MCF 10A (cell line): ENCODE measurements at regions of chr6 and their contacts with region 1.

Region 1: DNA sequence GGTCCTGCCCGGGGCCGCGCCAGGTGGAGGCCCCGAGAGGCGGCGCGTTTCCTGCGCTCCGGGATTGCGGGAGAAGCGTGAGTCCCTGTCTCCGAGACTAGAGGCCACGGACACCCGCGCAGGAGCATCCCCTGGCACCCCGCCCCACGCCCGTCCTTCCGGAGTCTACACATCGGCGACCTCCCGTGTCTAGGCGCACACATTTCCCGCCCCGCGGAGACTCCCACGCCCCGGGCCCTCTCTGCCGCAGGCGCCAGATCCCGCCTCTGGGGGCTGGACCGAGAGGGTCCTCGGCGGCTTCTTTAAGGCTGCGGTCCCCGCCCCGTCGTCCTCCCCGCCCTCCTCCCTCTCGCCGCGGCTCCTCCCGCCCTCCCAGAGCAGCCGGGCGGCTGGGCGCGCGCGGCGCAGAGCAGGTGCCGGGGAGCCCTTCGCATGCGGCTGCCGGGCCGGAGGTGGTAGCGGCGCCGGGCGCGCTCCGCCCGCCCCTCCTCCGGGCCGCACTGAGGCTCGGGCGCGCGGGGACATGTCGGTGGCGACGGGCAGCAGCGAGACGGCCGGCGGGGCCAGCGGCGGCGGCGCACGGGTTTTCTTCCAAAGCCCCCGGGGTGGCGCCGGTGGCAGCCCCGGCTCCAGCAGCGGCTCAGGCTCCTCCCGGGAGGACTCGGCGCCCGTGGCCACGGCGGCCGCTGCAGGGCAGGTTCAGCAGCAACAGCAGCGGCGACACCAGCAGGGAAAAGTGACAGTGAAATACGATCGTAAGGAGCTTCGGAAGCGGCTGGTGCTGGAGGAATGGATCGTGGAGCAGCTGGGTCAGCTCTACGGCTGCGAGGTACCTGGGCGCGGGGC is at the start of gene PPP1R14C:
- DNase-seq: peak; percentile 65
- H3K4me3 Mint-ChIP-seq: peak within 1 kb of the TSS; percentile 83
- H3K27ac Mint-ChIP-seq: peak within 1 kb of the TSS; percentile 96
- H3K4me1 Mint-ChIP-seq: peaks cover 35% of the 10 kb centered on the region
- H3K27me3 Mint-ChIP-seq: no peaks in the 10 kb centered on the region
- CTCF ChIP-seq: no peak
- total RNA-seq, gene PPP1R14C: 32.0 and 38.7 TPM in 2 replicates

Region 2: DNA sequence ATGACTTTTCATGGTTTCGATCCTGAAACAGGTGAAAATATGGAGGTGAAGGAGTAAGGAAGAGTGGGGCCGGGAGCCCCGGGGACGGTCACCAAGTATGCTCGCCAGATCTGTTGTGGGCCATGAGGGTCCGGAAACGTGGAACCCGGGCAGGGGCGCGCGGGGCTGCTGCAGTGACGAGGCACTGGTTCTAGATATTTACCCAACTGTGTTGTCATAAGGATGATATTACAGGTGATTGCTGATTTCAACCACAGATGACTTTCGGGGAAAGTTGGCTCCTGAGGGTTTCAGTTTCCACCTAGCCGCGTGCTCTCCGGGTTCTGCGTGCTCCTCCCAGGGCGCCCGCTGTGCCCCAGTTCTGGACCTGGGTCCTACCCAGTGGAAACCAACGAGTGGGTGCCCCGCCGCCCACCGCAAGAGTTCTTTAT is 232.2 kb before region 1 on chr6:
- CTCF ChIA-PET with region 1: no interaction called
- POLR2A ChIA-PET with region 1: no interaction called
- intact Hi-C with region 1: no loop called
- DNase-seq: no peak
- H3K4me3 Mint-ChIP-seq: no peak overlapping the region
- H3K27ac Mint-ChIP-seq: no peak overlapping the region
- H3K4me1 Mint-ChIP-seq: peaks cover 5% of the 10 kb centered on the region
- H3K27me3 Mint-ChIP-seq: no peaks in the 10 kb centered on the region
- CTCF ChIP-seq: no peak

Region 3: GRCh38 chr6:150063640-150064039 is 79.3 kb before region 1 on chr6:
- CTCF ChIA-PET with region 1: no interaction called
- POLR2A ChIA-PET with region 1: no interaction called
- intact Hi-C with region 1: no loop called
- DNase-seq: no peak
- H3K4me3 Mint-ChIP-seq: no peak overlapping the region
- H3K27ac Mint-ChIP-seq: no peak overlapping the region
- H3K4me1 Mint-ChIP-seq: no peaks in the 10 kb centered on the region
- H3K27me3 Mint-ChIP-seq: peaks cover 4% of the 10 kb centered on the region
- CTCF ChIP-seq: no peak

Region 4: DNA sequence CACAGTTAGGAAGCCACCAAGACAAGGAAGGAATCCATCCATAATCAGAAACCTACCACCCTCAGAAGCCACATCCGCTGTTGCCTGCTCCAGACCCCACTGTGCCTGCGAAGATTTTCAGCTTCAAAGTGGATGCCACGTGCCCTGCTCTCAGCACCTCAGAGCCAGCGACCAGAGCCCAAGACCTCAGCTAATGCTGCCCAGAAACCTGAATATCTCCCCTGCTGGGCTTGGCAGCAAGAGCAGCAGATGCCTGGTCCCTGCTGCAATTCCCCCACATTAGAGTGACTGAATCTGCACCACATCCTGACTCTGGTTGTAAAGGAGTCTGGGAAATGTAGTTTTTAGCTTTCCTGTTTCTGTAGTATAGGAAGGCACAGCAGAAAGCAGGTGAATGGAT is 63.3 kb before region 1 on chr6:
- CTCF ChIA-PET with region 1: interaction called, 7 read pairs
- POLR2A ChIA-PET with region 1: interaction called, 17 read pairs
- intact Hi-C with region 1: loop called (anchors 2 kb)
- DNase-seq: no peak
- H3K4me3 Mint-ChIP-seq: no peak overlapping the region
- H3K27ac Mint-ChIP-seq: no peak overlapping the region
- H3K4me1 Mint-ChIP-seq: peaks cover 6% of the 10 kb centered on the region
- H3K27me3 Mint-ChIP-seq: peaks cover 10% of the 10 kb centered on the region
- CTCF ChIP-seq: no peak

Region 5: DNA sequence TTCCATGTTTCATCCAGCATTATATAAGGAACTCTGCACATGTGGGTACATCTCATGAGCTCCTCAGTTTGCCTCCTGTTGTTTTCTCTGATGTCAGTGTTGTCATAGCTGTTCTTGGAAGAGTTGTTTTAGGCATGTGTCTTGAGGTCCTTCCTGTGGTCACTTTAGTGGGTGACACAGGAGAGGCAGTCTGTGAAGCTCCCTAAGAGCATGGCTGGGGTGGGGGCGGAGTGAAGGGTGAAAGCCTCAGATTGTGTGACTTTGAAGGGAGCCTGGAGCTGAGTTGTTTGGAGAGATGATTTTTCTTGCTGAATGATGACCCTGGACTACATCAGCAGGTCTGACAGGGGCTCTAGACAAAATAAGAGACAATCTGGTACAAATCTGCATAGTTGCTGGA is 37.6 kb after region 1 on chr6:
- CTCF ChIA-PET with region 1: interaction called, 3 read pairs
- POLR2A ChIA-PET with region 1: interaction called, 12 read pairs
- intact Hi-C with region 1: no loop called
- DNase-seq: no peak
- H3K4me3 Mint-ChIP-seq: no peak overlapping the region
- H3K27ac Mint-ChIP-seq: no peak overlapping the region
- H3K4me1 Mint-ChIP-seq: peaks cover 32% of the 10 kb centered on the region
- H3K27me3 Mint-ChIP-seq: no peaks in the 10 kb centered on the region
- CTCF ChIP-seq: no peak

Region 6: GRCh38 chr6:150229775-150230561 is 87.1 kb after region 1 on chr6:
- CTCF ChIA-PET with region 1: no interaction called
- POLR2A ChIA-PET with region 1: interaction called, 10 read pairs
- intact Hi-C with region 1: no loop called
- DNase-seq: no peak
- H3K4me3 Mint-ChIP-seq: no peak overlapping the region
- H3K27ac Mint-ChIP-seq: peak overlapping the region; percentile 86
- H3K4me1 Mint-ChIP-seq: peaks cover 16% of the 10 kb centered on the region
- H3K27me3 Mint-ChIP-seq: no peaks in the 10 kb centered on the region
- CTCF ChIP-seq: no peak

Region 7: GRCh38 chr6:150267686-150268561 is 125.0 kb after region 1 on chr6:
- CTCF ChIA-PET with region 1: interaction called, 7 read pairs
- POLR2A ChIA-PET with region 1: interaction called, 115 read pairs
- intact Hi-C with region 1: loop called (anchors 5 kb)
- DNase-seq: peak; percentile 77
- H3K4me3 Mint-ChIP-seq: no peak overlapping the region
- H3K27ac Mint-ChIP-seq: peak overlapping the region; percentile 92
- H3K4me1 Mint-ChIP-seq: peaks cover 51% of the 10 kb centered on the region
- H3K27me3 Mint-ChIP-seq: no peaks in the 10 kb centered on the region
- CTCF ChIP-seq: no peak

Region 8: GRCh38 chr6:150395398-150396009 is 252.6 kb after region 1 on chr6:
- CTCF ChIA-PET with region 1: interaction called, 14 read pairs
- POLR2A ChIA-PET with region 1: interaction called, 4 read pairs
- intact Hi-C with region 1: loop called (anchors 10 kb)
- DNase-seq: peak; percentile 75
- H3K4me3 Mint-ChIP-seq: no peak overlapping the region
- H3K27ac Mint-ChIP-seq: no peak overlapping the region
- H3K4me1 Mint-ChIP-seq: peaks cover 5% of the 10 kb centered on the region
- H3K27me3 Mint-ChIP-seq: no peaks in the 10 kb centered on the region
- CTCF ChIP-seq: peak; percentile 62